Activated CD4-positive, alpha-beta memory T cell treated with anti-CD3 and anti-CD28 coated beads, Interleukin-2, amount 10 ng/mL, durations not matched to agents 7 days and 5 days (primary cell): ENCODE measurements at regions of chr6 and their contacts with region 1.

Region 1: DNA sequence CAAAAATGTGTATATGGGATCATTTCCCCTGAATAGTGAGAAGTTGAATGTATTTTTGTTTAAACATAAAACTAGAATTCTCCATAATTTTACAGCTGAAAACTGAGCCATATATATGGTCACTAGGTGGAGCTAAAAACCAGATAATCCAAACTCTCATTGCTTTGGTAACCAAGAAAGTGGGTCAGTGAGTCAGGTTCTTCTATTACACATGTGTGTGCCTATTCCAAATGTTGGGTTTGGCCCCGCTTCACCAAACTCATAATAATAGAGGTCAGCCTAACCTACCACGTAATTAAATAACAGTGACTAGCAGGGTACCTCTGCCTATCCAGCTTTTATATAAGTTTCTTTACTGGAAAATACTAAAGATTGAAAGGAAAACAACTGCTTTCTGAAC is 19.3 kb upstream of the RNGTT start:
- DNase-seq: peak; percentile 20
- H3K4me3 Mint-ChIP-seq: no peak overlapping the region
- H3K27ac Mint-ChIP-seq: no peak overlapping the region
- H3K4me1 Mint-ChIP-seq: no peaks in the 10 kb centered on the region
- H3K27me3 Mint-ChIP-seq: peaks cover 4% of the 10 kb centered on the region

Region 2: DNA sequence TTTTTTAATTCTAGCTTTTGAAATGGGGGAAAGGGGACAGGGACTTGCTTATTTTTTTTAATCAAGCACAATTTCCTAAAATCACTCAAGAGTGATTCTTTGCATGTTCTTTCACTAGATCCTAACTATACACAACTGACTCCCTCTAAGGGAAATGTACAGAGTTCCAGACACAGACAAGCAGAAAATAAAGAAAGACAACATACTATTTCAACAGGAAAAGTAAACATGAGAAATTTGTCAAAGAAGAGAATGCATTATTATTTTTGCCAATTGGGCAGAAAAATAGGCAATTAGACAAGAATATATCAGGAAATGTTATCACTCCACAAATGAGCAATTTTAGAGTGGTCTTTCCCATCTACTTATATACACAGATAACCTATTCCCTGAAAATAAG is 147.5 kb before region 1 on chr6:
- CTCF ChIA-PET with region 1: no interaction called
- POLR2A ChIA-PET with region 1: no interaction called
- DNase-seq: no peak
- H3K4me3 Mint-ChIP-seq: no peak overlapping the region
- H3K27ac Mint-ChIP-seq: no peak overlapping the region
- H3K4me1 Mint-ChIP-seq: no peaks in the 10 kb centered on the region
- H3K27me3 Mint-ChIP-seq: no peaks in the 10 kb centered on the region

Region 3: DNA sequence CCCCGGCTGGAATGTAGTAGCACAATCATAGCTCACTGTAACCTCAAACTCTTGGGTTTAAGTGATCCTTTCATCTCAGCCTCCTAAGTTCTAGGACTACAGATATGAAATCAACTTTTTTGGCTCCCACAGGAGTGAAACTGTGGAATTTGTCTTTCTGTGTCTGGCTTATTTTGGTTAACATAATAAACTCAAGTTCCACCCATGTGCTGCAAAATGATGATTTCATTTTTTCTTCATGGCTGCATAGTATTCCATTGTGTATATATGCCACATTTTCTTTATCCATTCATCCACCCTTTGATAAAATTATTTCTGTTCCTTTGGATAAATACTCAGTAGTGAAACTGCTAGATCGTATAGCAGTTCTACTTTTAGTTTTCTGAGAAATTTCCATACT is 49.2 kb before region 1 on chr6:
- CTCF ChIA-PET with region 1: no interaction called
- POLR2A ChIA-PET with region 1: no interaction called
- DNase-seq: no peak
- H3K4me3 Mint-ChIP-seq: no peak overlapping the region
- H3K27ac Mint-ChIP-seq: no peak overlapping the region
- H3K4me1 Mint-ChIP-seq: no peaks in the 10 kb centered on the region
- H3K27me3 Mint-ChIP-seq: no peaks in the 10 kb centered on the region

Region 4: DNA sequence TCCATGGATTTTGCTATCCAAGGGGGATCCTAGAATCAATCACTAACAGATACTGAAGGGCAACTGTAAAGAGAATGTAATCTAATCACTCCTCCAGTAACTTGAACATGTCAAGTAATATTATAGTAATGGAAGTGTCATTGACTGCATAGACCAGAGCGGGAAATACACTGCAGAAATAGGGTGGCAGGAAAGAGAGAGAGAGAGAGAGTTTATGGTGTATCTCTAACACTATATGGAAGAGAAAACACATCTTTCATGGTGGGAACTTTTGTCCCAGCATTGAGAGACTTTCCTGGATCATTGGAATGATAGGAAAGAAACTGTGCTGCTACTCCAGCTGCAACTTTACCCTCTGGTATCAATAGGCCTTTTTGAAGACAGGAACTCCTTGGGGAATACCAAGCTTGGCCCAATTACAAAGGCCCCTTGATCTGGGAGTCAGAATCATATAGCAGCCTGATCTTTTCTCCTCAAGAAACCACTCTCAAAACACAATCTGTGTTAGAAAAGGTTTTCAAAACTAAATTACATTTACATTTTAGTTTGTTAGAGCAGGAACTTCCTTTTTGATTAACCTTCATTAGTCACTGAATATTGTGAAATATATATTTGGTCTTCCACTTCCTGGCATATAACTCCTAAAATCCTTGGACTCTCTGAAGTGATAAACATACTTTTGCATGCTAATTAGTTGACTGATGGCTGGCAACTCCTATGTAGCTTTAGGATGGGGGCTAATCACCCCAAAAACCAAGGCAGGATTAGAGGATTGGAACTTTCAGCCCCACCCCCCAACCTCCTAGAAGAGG is 10.2 kb after region 1 on chr6:
- CTCF ChIA-PET with region 1: interaction called, 13 read pairs
- POLR2A ChIA-PET with region 1: no interaction called
- DNase-seq: no peak
- H3K4me3 Mint-ChIP-seq: no peak overlapping the region
- H3K27ac Mint-ChIP-seq: no peak overlapping the region
- H3K4me1 Mint-ChIP-seq: no peaks in the 10 kb centered on the region
- H3K27me3 Mint-ChIP-seq: no peaks in the 10 kb centered on the region

Region 5: DNA sequence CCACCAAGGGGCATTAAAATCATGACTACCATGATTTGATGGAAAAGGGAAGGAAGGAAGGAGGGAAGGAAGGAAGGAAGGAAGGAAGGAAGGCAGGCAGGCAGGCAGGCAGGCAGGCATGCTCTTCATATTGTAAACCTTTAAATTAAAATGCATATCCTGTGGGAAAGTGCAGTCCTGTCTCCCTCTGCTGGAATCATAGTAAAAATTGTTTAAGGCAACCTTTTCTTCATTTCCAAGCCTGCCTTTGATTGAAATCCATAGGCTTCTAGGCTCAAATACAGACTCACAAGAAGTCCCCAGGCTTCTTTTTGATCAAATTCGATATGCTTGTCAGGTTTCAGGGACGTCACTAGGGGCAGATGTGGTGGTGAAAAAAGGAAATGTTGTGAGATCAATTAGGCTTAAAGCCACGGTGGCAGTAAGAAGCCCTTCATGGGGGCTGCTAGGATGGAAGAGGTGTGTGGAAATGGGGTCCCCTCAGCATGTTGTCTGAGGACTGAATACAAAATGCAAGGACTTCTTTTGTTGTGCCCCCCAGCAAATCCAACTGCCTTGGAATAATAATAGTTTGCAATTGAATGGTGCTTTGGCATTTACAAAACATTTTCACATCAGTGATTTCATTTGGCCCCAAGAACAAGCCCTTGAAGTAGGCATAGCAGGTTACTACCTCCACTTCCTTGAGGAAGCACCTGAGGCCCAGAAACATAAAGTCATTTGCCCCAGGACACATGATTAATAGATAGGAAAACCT is 260.0 kb after region 1 on chr6:
- CTCF ChIA-PET with region 1: interaction called, 17 read pairs
- POLR2A ChIA-PET with region 1: no interaction called
- DNase-seq: no peak
- H3K4me3 Mint-ChIP-seq: no peak overlapping the region
- H3K27ac Mint-ChIP-seq: no peak overlapping the region
- H3K4me1 Mint-ChIP-seq: peaks cover 10% of the 10 kb centered on the region
- H3K27me3 Mint-ChIP-seq: peaks cover 20% of the 10 kb centered on the region